SK-N-SH (cell line): ENCODE measurements at regions of chr20 and their contacts with region 1.

Region 1: DNA sequence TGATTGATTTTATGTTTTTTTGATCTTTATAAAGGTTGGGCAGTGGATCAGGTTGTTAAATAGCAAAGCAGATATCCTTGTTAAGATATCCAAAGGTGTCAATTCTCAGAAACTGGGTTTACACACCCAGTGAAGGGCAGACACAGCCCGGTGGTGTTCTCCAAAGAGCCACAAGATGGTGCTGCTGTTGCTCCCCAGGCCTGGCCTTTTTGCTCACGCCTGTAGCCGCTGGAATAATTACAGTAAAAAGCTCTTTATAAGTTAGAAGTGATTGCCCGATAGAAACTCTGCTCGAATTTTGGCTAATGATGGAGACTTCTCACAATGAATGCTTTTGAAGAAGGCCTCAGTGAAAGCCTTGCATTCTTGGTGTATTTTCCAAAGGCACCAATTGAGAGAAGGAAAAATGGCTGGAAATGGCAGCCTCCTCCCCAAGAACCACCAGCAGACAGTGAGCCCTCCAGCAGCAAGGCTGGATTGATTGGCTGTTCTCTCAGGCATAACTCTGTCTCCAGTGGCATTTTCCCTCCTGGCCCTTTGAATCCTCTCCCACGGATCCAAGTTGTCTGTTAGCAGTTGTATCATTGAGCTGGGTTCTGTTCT is 120.5 kb upstream of the CHD6 start:
- DNase-seq: peak; percentile 64
- H3K4me3 ChIP-seq: 0 out of 4 replicates have a peak overlapping the region, but pooled peaks of 1 of the 2 experiments have one; percentile 11
- H3K27ac ChIP-seq: no peak overlapping the region
- H3K4me1 ChIP-seq: no peaks in the 10 kb centered on the region; a peak in 1 of 4 replicates
- H3K27me3 ChIP-seq: no peaks in the 10 kb centered on the region
- CTCF ChIP-seq: peak; percentile 72
- EP300 ChIP-seq: no peak
- RAD21 ChIP-seq: peak; percentile 94

Region 2: GRCh38 chr20:41125530-41126457 is 612.9 kb before region 1 on chr20:
- CTCF ChIA-PET with region 1: no interaction called
- POLR2A ChIA-PET with region 1: no interaction called
- DNase-seq: no peak
- H3K4me3 ChIP-seq: no peak overlapping the region
- H3K27ac ChIP-seq: no peak overlapping the region; a peak in 1 of 4 replicates
- H3K4me1 ChIP-seq: no peaks in the 10 kb centered on the region
- H3K27me3 ChIP-seq: no peaks in the 10 kb centered on the region
- CTCF ChIP-seq: no peak
- EP300 ChIP-seq: no peak
- RAD21 ChIP-seq: no peak

Region 3: DNA sequence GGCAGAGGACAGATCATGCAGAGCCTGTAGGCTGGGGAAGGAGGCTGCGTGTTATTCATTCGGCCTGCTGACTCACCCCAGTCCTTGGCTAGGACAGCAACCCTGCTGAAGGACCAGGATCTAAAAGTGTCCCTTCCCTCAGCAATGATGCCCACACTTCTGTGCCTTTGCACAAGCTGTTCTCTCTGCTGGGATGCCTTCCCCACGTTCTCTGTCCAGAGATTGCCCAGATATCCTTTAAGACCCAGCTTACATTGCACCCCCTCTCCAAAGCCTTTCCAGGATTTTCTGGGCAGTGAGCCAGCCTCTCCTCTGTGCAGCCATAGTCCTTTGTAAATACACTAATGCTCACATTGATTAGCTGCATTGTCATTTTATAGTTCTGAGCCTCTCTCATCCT is 21.2 kb before region 1 on chr20:
- CTCF ChIA-PET with region 1: interaction called, 17 read pairs
- POLR2A ChIA-PET with region 1: no interaction called
- DNase-seq: peak; percentile 26
- H3K4me3 ChIP-seq: no peak overlapping the region
- H3K27ac ChIP-seq: no peak overlapping the region
- H3K4me1 ChIP-seq: peaks cover 0 to 7% of the 10 kb centered on the region in 2 experiments; a peak in 1 of 4 replicates
- H3K27me3 ChIP-seq: no peaks in the 10 kb centered on the region
- CTCF ChIP-seq: no peak
- EP300 ChIP-seq: no peak
- RAD21 ChIP-seq: no peak

Region 4: GRCh38 chr20:41889126-41889870 is 150.6 kb after region 1 on chr20:
- CTCF ChIA-PET with region 1: interaction called, 15 read pairs
- POLR2A ChIA-PET with region 1: no interaction called
- DNase-seq: peak; percentile 47
- H3K4me3 ChIP-seq: no peak overlapping the region
- H3K27ac ChIP-seq: no peak overlapping the region
- H3K4me1 ChIP-seq: no peaks in the 10 kb centered on the region
- H3K27me3 ChIP-seq: no peaks in the 10 kb centered on the region
- CTCF ChIP-seq: no peak
- EP300 ChIP-seq: no peak
- RAD21 ChIP-seq: peak; percentile 77

Region 5: GRCh38 chr20:42018951-42019350 is 280.2 kb after region 1 on chr20:
- CTCF ChIA-PET with region 1: interaction called, 12 read pairs
- POLR2A ChIA-PET with region 1: no interaction called
- DNase-seq: no peak
- H3K4me3 ChIP-seq: no peak overlapping the region
- H3K27ac ChIP-seq: no peak overlapping the region
- H3K4me1 ChIP-seq: no peaks in the 10 kb centered on the region
- H3K27me3 ChIP-seq: no peaks in the 10 kb centered on the region
- CTCF ChIP-seq: no peak
- EP300 ChIP-seq: no peak
- RAD21 ChIP-seq: peak; percentile 24; the same call in 1 of the 2 replicates

Region 6: DNA sequence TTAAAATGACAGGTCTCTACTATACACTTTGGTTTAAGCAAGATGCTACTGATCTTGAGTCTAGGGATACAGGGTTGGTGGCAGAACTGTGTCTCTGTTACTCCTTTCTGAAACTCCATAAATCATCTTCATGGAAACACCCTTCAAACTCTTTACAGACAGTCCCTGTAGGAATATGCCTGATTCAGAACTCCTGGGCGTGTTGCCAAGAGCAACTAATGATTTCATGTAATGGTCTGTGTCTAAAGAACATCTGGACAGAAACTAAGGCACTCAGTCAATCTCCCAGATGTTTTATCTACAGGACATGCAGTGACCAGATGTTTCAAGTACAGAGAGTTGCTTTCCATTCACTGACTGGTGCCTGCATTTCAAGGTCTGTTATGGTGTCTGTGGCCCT is 343.9 kb after region 1 on chr20:
- CTCF ChIA-PET with region 1: no interaction called
- POLR2A ChIA-PET with region 1: no interaction called
- DNase-seq: peak; percentile 81
- H3K4me3 ChIP-seq: no peak overlapping the region
- H3K27ac ChIP-seq: peak overlapping the region in 1 of 2 experiments; percentile 97; a peak in 2 of 4 replicates
- H3K4me1 ChIP-seq: peaks cover 0 to 32% of the 10 kb centered on the region in 2 experiments; a peak in 2 of 4 replicates
- H3K27me3 ChIP-seq: no peaks in the 10 kb centered on the region
- CTCF ChIP-seq: no peak
- EP300 ChIP-seq: peak in 1 of 2 experiments; percentile 91; a peak in 2 of 4 replicates
- RAD21 ChIP-seq: peak; percentile 38

Region 7: GRCh38 chr20:42530822-42531448 is 792.2 kb after region 1 on chr20:
- CTCF ChIA-PET with region 1: interaction called, 14 read pairs
- POLR2A ChIA-PET with region 1: no interaction called
- DNase-seq: peak; percentile 54
- H3K4me3 ChIP-seq: no peak overlapping the region
- H3K27ac ChIP-seq: no peak overlapping the region
- H3K4me1 ChIP-seq: peaks cover 0 to 3% of the 10 kb centered on the region in 2 experiments; a peak in 1 of 4 replicates
- H3K27me3 ChIP-seq: no peaks in the 10 kb centered on the region
- CTCF ChIP-seq: peak; percentile 24
- EP300 ChIP-seq: no peak
- RAD21 ChIP-seq: peak; percentile 78